ENCODE measurements at regions of chr12 and their contacts with region 1.

Region 1: DNA sequence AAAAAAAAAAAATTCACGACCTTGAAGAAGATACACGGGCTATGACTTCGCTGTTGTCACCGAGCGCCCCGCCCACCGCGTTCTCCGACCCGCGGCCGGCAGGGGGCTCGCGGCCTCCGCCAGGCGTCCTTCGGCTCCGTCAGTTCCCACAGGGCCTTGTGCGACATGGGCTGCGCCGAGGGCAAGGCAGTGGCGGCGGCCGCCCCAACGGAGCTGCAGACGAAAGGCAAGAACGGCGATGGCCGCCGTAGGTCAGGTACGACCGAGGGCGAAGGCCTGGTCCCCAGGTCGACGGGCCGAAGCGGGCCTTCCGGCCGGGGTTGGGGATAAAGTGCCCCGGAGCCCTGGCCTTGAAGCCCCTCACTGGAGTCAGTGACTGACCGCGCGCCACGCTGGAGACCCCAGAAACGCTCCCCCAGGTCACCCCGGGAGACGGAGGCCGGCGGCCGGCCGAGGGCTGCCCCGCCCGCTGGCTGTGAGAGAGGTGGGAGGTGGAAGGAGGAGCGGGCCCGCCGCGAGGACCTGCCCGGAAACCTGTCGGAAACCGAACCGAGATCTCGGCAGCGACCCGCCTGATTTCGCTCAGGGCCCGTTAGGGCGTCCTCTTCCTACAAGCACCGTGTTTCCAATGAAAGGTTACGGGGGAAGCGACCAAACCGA is at the start of gene TXNRD1:
- DNase-seq: peak; percentile 87
- ATAC-seq: peak; percentile 96
- H3K4me3 Mint-ChIP-seq: peak within 1 kb of the TSS; percentile 68
- H3K27ac Mint-ChIP-seq: no peak within 1 kb of the TSS
- H3K4me1 Mint-ChIP-seq: peaks cover 4% of the 10 kb centered on the region; the same call in 1 of the 2 replicates
- H3K27me3 Mint-ChIP-seq: peaks cover 26% of the 10 kb centered on the region
- CTCF ChIP-seq: peak; percentile 38; the same call in 1 of the 2 replicates
- total RNA-seq, gene TXNRD1: 95.6 to 113 TPM (median 98.7 TPM) in 3 replicates

Region 2: DNA sequence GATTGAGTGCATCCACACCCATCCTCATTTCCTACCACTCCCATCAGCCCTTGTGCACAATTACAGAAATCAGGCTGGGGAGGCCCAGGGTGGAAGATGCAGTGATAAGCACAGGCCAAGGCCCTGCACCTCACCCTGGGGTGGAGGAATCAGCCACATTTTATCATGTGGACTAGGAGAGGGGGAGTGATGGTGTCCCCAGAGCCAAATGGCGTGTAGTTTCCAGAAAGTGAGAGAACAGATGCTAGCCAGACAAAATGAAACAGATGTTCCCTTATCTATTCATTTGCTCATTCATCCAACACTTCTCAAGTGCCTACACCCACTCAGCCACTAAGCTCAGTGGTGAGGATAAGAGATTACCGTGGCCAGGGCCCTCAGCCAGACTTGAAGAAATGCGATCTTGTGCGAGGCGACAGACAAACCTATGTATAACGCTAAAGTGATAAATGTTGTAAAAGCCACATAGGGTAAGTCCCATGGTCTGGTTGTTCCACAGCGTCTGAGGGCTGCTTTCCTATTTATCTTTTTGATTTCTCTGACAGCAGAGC is 535.1 kb before region 1 on chr12:
- CTCF ChIA-PET with region 1: no interaction called
- POLR2A ChIA-PET with region 1: no interaction called
- DNase-seq: no peak
- ATAC-seq: no peak
- H3K4me3 Mint-ChIP-seq: no peak overlapping the region
- H3K27ac Mint-ChIP-seq: no peak overlapping the region
- H3K4me1 Mint-ChIP-seq: peaks cover 17% of the 10 kb centered on the region
- H3K27me3 Mint-ChIP-seq: no peaks in the 10 kb centered on the region
- CTCF ChIP-seq: no peak

Region 3: DNA sequence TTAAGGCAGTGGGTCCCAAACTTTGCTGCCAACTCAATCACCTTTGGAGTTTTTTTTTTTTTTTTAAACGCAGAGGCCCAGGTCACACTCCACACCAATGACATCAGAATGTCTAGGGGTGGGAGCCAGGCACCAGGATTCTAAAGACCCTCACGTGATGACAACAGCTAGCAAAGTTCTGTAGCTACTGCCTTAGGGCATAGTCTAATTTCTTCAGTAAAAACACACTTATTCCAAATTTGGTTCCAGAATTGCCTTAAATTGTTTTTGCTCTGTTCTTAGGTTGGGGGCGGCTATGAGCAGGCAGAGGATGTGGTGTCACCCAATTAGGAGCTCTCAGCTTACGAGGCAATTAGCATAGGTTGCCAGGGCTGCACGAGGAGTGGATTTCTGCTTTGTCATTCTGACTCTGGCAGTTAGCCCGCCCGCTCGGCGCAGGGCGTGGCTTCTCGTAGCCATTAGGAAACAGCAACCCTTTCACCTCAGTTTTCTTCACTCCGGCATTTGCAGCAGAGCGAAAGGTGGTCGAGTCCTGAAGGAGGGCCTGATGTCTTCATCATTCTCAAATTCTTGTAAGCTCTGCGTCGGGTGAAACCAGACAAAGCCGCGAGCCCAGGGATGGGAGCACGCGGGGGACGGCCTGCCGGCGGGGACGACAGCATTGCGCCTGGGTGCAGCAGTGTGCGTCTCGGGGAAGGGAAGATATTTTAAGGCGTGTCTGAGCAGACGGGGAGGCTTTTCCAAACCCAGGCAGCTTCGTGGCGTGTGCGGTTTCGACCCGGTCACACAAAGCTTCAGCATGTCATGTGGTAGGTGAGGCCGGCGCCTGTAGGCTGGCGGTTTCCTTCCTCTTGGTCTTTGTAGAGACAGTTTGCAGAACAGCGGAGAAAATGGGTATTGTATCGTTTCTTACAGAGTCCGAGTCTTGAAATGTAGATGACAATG is 71.0 kb after region 1 on chr12:
- CTCF ChIA-PET with region 1: interaction called, 11 read pairs
- POLR2A ChIA-PET with region 1: interaction called, 4 read pairs
- DNase-seq: peak; percentile 91
- ATAC-seq: peak; percentile 92
- H3K4me3 Mint-ChIP-seq: peak overlapping the region; percentile 99
- H3K27ac Mint-ChIP-seq: peak overlapping the region; percentile 99
- H3K4me1 Mint-ChIP-seq: peaks cover 29% of the 10 kb centered on the region
- H3K27me3 Mint-ChIP-seq: no peaks in the 10 kb centered on the region; the same call in 1 of the 2 replicates
- CTCF ChIP-seq: no peak

Region 4: DNA sequence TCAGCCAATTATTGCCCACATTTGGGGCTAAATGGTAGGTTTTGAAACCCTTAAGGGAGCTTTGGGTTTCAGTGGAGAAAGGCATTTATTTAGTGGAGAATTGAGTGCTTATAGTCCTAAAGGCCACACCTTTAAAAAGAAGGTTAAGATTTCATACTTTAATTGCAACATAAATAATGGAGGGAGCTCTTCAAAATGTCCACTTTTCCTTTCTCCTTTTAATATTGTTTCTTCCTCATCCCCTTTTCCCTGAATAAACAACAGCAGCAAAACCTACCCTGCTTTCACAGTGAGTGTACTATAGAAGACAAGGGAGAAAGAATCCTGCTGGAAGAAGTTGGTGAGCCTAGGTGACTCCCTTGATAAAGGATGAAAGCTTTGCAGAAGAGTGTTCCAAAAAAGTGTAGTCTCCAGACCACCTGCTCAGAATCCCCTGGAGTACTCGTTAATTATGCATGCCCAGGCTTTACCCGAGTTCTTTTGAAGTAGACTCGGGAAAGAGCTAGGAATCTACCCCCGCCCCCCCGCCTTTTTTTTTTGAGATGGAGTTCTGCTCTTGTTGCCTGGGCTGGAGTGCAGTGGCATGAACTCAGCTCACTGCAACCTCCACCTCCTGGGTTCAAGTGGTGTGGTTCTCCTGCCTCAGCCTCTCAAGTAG is 76.2 kb after region 1 on chr12:
- CTCF ChIA-PET with region 1: interaction called, 11 read pairs
- POLR2A ChIA-PET with region 1: interaction called, 4 read pairs
- DNase-seq: no peak
- ATAC-seq: peak; percentile 4; the same call in 1 of the 2 replicates
- H3K4me3 Mint-ChIP-seq: peak overlapping the region; percentile 42
- H3K27ac Mint-ChIP-seq: peak overlapping the region; percentile 75
- H3K4me1 Mint-ChIP-seq: peaks cover 50% of the 10 kb centered on the region
- H3K27me3 Mint-ChIP-seq: no peaks in the 10 kb centered on the region
- CTCF ChIP-seq: no peak

Region 5: GRCh38 chr12:104303538-104304151 is 87.9 kb after region 1 on chr12 and contains the start of gene EID3:
- CTCF ChIA-PET with region 1: interaction called, 11 read pairs
- POLR2A ChIA-PET with region 1: no interaction called
- DNase-seq: peak; percentile 91
- ATAC-seq: peak; percentile 91
- H3K4me3 Mint-ChIP-seq: peak within 1 kb of the TSS; percentile 75
- H3K27ac Mint-ChIP-seq: peak within 1 kb of the TSS; percentile 91
- H3K4me1 Mint-ChIP-seq: peaks cover 70% of the 10 kb centered on the region
- H3K27me3 Mint-ChIP-seq: no peaks in the 10 kb centered on the region; the same call in 1 of the 2 replicates
- CTCF ChIP-seq: no peak
- total RNA-seq, gene EID3: 2.0 to 3.2 TPM (median 2.5 TPM) in 3 replicates

Region 6: DNA sequence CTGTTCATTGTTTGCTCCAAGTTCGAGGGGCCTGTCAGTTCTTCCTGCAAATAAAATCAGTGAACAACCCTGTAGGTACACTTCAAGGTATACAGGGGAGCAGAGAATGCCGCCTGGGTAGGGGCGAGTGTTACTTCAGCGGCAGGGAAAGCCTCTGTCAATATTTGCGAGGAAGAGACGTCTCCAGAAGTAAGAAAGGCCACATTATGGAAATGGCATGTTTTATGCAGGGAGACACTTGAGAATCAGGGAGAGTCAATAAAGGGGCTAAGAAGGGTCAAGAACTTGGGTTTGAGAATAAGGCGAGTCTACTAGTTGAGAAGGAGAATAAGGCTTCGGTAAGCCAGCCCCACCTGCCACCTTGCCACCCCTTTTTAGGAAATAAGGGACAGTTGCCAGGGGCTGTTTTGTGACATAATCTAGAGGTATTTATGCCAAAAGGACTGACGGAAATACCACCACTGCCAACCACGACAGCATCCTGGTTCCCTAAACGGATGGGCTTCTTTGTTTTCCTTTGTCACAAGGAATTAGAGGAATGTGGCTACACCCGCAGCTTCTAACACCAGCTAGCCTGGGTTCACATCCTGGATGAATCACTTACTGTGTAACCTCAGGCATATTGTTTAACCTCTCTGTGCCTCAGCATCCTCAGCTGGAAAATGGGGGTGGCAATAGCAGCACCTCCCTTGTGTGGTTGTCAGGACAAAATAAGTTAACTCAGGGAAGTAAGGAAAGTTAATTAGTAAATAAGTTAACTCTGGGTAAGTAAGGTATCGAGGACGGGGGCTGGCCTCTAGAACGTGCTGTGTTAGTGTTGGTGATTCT is 155.5 kb after region 1 on chr12:
- CTCF ChIA-PET with region 1: no interaction called
- POLR2A ChIA-PET with region 1: no interaction called
- DNase-seq: peak; percentile 17
- ATAC-seq: peak; percentile 82
- H3K4me3 Mint-ChIP-seq: no peak overlapping the region
- H3K27ac Mint-ChIP-seq: peak overlapping the region; percentile 85
- H3K4me1 Mint-ChIP-seq: peaks cover 31% of the 10 kb centered on the region
- H3K27me3 Mint-ChIP-seq: peaks cover 3% of the 10 kb centered on the region; the same call in 1 of the 2 replicates
- CTCF ChIP-seq: no peak